Gastrocnemius medialis (tissue), 4 donors: ENCODE measurements at regions of chr19 and their contacts with region 1.

Region 1: GRCh38 chr19:54137086-54137921 is at the start of gene CNOT3:
- DNase-seq: peak; percentile 100
- ATAC-seq: peak; percentile 90 to 94
- H3K4me3 ChIP-seq: peak within 1 kb of the TSS; percentile 86 to 99 (median 92)
- H3K27ac ChIP-seq: peak within 1 kb of the TSS; percentile 97 to 100 (median 98)
- H3K4me1 ChIP-seq: peaks cover 29 to 44% of the 10 kb centered on the region in 2 donors
- H3K27me3 ChIP-seq: no peaks in the 10 kb centered on the region
- CTCF ChIP-seq: no peak
- POLR2A ChIP-seq: peak; percentile 94 to 98
- total RNA-seq, gene CNOT3: 5.1 to 14.0 (median 10.2) TPM

Region 2: DNA sequence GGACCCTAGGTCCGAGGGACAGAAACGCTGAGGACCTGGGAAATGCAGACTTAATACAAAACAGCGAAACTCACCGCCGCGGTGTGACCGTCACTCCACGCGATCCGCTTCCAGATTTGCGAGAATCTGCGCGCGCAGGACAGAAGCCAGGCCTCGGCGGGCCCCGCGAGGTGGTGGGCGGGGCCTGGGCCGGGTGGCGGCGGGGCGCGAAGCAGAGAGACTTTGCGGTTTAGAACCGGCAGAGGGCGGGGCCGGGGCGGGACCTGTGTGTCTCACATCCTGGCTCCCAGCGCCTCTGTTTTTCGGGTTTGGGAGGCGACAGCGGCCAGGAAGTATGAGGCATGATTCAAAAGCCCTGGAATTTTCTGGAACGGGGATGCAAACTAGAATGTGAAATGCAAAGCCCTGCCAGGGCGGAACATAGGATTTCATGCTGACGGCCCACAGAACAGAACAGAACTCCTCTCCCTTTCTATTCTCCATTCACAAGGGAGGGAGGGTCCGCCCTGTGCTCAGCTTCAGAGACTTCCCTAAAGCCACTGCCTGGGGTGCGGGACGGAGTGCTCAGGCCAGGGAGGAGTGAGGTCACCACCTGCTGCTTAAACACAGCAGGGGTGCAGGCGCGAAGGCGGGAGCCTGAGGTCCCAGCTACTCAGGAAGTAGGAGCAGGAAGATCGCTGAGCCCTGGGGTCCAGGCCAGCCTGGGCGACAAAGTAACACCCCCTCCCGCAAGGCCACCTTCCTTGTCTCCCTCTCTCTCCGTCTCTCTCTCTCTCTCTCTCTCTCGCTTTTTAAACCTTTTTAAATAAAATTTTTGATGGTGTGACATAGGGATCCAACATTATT is 1446.7 kb before region 1 on chr19:
- in situ Hi-C with region 1: no loop called
- intact Hi-C with region 1: no loop called
- DNase-seq: peak; percentile 76 to 82
- ATAC-seq: peak; percentile 89 to 92
- H3K4me3 ChIP-seq: peak overlapping the region; percentile 57 to 70 (median 60)
- H3K27ac ChIP-seq: peak overlapping the region; percentile 81 to 84 (median 82)
- H3K4me1 ChIP-seq: peaks cover 3 to 8% of the 10 kb centered on the region in 2 donors
- H3K27me3 ChIP-seq: peaks cover 0 to 6% (median 3%) of the 10 kb centered on the region in 3 donors
- CTCF ChIP-seq: peak in 2 of 5 experiments; percentile 26 to 34
- POLR2A ChIP-seq: peak; percentile 38 to 72

Region 3: GRCh38 chr19:54203151-54203611 is 65.9 kb after region 1 on chr19:
- in situ Hi-C with region 1: no loop called
- intact Hi-C with region 1: loop called (anchors 1 kb)
- DNase-seq: no peak
- ATAC-seq: no peak
- H3K4me3 ChIP-seq: peak overlapping the region in 2 of 4 donors; percentile 76 to 78
- H3K27ac ChIP-seq: peak overlapping the region; percentile 63 to 95 (median 92)
- H3K4me1 ChIP-seq: peaks cover 60 to 63% of the 10 kb centered on the region in 2 donors
- H3K27me3 ChIP-seq: no peaks in the 10 kb centered on the region
- CTCF ChIP-seq: no peak
- POLR2A ChIP-seq: no peak